Gastrocnemius medialis (tissue), 4 donors: ENCODE measurements at regions of chr18 and their contacts with region 1.

Region 1: DNA sequence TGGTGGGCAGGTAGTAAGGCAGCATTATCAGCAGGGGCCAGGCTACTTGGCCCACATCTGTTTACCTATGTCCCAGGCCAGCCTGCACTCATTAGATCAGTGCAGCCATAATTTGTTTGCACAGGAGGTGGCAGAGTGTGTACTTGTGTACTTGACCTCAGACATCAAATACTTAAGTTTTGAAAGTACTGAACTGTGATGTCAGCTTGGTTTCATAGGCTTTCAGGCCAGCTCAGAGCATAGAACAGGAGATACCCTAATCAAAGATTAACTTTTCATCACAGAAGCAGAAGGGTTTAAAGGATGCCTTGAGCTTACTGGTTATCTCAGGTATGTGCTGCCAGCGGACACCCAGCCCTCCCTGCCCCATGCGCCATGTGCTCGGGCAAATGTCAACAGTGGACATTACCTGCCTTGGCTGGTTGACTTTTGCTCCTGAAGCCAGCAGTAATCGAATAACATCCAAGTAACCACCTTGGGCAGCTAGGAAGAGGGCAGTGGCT is 33.2 kb downstream of the ANKRD29 start:
- DNase-seq: no peak
- ATAC-seq: no peak
- H3K4me3 ChIP-seq: no peak overlapping the region
- H3K27ac ChIP-seq: no peak overlapping the region
- H3K4me1 ChIP-seq: peaks cover 7 to 23% of the 10 kb centered on the region in 2 donors
- H3K27me3 ChIP-seq: no peaks in the 10 kb centered on the region
- CTCF ChIP-seq: no peak
- POLR2A ChIP-seq: no peak

Region 2: GRCh38 chr18:23377669-23378301 is 251.7 kb before region 1 on chr18:
- in situ Hi-C with region 1: no loop called
- intact Hi-C with region 1: no loop called
- DNase-seq: no peak
- ATAC-seq: peak; percentile 68 to 75
- H3K4me3 ChIP-seq: no peak overlapping the region
- H3K27ac ChIP-seq: peak overlapping the region; percentile 42 to 64 (median 46)
- H3K4me1 ChIP-seq: peaks cover 7 to 9% of the 10 kb centered on the region in 2 donors
- H3K27me3 ChIP-seq: no peaks in the 10 kb centered on the region
- CTCF ChIP-seq: no peak
- POLR2A ChIP-seq: no peak

Region 3: GRCh38 chr18:23703057-23703986 is 73.8 kb after region 1 on chr18:
- in situ Hi-C with region 1: loop called in 1 of 4 experiments (anchors 10 kb)
- intact Hi-C with region 1: no loop called
- DNase-seq: no peak
- ATAC-seq: peak in 1 of 2 donors; percentile 50
- H3K4me3 ChIP-seq: no peak overlapping the region
- H3K27ac ChIP-seq: no peak overlapping the region
- H3K4me1 ChIP-seq: no peaks in the 10 kb centered on the region
- H3K27me3 ChIP-seq: no peaks in the 10 kb centered on the region
- CTCF ChIP-seq: peak; percentile 18 to 60 (median 44)
- POLR2A ChIP-seq: no peak

Region 4: DNA sequence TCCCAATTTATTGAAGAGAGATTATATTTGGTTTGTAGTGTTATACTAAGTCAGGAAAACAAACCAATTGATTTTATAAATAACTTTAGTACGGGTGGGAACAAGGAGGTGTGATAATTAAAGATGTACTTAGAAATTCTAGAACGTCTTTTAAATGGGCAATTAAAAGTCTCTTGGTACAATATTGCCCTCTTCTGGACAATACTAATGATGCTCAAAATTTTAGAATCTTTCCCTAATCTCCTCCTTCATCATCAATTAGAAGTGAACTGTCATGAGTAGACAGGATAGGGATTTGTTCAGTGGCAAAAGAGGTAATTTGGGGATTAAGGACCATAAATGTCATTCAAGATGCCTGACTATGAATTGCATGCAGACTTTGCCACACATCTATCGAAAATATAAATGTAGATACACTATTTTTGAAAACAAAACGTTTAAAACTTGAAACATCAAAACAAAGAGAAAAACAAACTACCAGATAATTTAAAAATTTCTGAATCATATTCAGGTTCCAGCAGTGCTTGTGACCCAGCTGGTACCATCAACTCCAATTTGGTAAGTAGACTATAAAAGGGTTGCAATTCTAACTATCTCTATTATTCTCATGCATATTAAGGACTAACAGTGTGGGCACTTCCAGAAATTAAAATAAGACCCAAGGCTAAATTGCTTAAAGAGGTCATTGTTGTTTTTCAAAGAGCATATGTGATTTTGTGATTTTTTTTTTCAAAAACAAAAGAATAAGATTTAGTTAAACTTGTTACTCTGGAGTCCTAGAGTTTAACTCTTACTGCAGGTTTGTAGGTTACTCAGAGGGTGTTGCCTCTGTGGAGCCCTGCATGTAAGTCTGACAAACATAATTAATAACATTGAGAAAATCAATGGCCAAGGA is 183.3 kb after region 1 on chr18:
- in situ Hi-C with region 1: loop called in 3 of 4 experiments (anchors 5 to 25 kb)
- intact Hi-C with region 1: no loop called
- DNase-seq: no peak
- ATAC-seq: no peak
- H3K4me3 ChIP-seq: no peak overlapping the region
- H3K27ac ChIP-seq: no peak overlapping the region
- H3K4me1 ChIP-seq: peaks cover 5 to 6% of the 10 kb centered on the region in 2 donors
- H3K27me3 ChIP-seq: no peaks in the 10 kb centered on the region
- CTCF ChIP-seq: peak; percentile 17 to 54 (median 25)
- POLR2A ChIP-seq: no peak

Region 5: DNA sequence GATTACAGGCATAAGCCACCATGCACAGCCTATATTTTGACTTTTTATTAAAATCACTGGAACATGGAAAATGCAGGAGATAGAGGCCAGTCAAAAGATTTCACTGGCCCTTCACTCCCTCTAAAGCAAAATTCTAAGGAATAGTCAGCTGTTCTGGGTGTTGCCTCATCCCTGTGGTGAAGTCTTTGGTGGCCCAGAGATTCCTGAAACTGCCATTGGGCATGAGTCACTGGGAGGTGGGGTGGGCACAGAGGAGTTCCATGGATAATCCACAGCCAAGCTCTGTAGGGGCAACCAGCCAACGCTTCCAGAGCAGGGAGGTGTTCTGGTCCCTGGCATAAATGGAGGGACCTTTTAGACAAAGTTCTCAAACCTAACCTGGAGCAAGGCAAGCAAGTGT is 295.3 kb after region 1 on chr18:
- in situ Hi-C with region 1: loop called in 2 of 4 experiments (anchors 10 to 25 kb)
- intact Hi-C with region 1: no loop called
- DNase-seq: no peak
- ATAC-seq: no peak
- H3K4me3 ChIP-seq: no peak overlapping the region
- H3K27ac ChIP-seq: no peak overlapping the region
- H3K4me1 ChIP-seq: no peaks in the 10 kb centered on the region
- H3K27me3 ChIP-seq: no peaks in the 10 kb centered on the region
- CTCF ChIP-seq: no peak
- POLR2A ChIP-seq: no peak

Region 6: DNA sequence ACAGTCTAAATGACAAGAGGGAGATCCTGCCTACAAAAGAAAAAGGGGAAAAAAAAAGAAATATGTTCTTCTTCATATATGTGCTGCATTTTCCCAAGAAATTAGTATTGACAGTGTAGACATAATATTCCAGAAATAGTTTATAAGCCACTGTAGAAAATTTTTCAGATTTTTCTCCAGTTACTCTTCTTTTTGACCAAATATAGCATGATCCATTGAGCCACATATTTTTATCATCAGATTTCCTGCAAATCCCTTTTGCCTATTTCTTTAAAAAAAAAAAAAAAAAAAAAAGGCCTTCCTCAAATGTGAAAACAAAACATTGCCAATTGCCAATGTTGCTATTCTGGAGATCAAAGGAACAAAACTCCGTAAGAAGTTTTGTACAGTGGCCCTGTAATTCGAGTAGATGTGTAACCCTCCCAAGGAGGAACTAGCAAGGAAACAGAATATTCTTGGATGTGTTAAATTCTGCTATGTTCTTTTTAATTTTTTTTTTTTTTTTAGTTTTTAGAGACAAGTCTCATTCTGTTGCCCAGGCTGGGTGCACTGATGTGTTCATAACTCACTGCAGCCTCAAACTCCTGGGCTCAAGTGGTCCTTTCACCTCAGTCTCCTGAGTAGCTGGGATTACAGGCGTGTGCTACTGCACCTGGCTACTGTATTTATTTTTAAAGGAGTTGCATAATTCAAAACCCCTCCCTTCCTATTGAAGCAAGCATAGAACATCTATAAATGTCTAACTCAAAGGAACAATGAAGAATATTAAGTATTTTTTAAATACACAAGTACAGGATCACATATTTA is 496.9 kb after region 1 on chr18:
- in situ Hi-C with region 1: loop called in 2 of 4 experiments (anchors 10 to 25 kb)
- intact Hi-C with region 1: no loop called
- DNase-seq: no peak
- ATAC-seq: no peak
- H3K4me3 ChIP-seq: no peak overlapping the region
- H3K27ac ChIP-seq: no peak overlapping the region
- H3K4me1 ChIP-seq: no peaks in the 10 kb centered on the region
- H3K27me3 ChIP-seq: no peaks in the 10 kb centered on the region
- CTCF ChIP-seq: no peak
- POLR2A ChIP-seq: no peak